ENCODE measurements at regions of chr10 and their contacts with region 1.

Region 1: DNA sequence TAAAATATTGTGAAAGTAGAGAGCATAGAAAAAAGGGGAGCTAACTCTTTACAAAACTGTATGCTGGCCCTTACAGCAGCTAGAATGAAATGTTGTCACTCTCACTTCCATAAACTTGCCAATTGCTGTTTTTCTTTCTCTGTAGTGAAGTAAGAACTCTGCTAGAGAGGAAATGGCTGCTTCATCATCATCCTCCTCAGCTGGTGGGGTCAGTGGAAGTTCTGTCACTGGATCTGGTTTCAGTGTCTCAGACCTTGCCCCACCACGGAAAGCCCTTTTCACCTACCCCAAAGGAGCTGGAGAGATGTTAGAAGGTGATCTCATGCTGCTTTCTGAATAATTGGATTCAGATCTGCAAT is 7.6 kb upstream of the ASCC1 start:
- DNase-seq: no peak
- ATAC-seq: peak; percentile 41
- H3K4me3 Mint-ChIP-seq: peak overlapping the region; percentile 52
- H3K27ac Mint-ChIP-seq: peak overlapping the region; percentile 92
- H3K4me1 Mint-ChIP-seq: peaks cover 55% of the 10 kb centered on the region
- H3K27me3 Mint-ChIP-seq: no peaks in the 10 kb centered on the region

Region 2: DNA sequence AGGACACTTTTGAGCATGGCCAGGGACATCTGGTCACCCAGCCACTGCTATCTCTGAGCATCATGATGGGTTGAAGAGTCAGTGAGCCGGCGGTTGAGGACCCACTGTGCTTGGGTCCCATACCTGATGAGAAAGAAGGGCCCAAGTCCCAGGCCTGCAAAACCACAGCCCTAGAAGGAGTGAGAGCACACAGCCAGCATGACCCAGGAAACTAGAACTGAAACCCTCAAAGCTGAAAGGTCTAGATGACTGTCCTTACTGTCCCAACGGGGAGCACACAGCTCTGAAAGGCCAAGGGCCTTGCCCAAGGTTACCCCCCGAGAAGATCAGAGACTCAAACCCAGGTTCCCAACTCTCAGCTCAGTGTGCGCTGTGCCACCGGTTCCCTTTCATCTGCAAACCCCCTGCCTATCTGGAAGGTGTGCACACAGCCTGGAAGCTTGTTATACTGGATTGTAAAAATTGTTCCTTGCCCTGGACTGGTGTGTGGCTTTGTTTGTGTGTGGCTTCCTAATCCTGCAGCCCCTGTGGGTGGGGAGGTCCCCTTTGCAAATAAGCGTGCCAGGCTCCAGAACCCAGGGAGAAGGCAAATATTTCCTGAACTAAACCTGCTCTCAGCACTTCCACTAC is 350.0 kb before region 1 on chr10:
- CTCF ChIA-PET with region 1: no interaction called
- POLR2A ChIA-PET with region 1: no interaction called
- intact Hi-C with region 1: no loop called
- DNase-seq: no peak
- ATAC-seq: no peak
- H3K4me3 Mint-ChIP-seq: no peak overlapping the region
- H3K27ac Mint-ChIP-seq: no peak overlapping the region
- H3K4me1 Mint-ChIP-seq: peaks cover 16% of the 10 kb centered on the region
- H3K27me3 Mint-ChIP-seq: no peaks in the 10 kb centered on the region

Region 3: DNA sequence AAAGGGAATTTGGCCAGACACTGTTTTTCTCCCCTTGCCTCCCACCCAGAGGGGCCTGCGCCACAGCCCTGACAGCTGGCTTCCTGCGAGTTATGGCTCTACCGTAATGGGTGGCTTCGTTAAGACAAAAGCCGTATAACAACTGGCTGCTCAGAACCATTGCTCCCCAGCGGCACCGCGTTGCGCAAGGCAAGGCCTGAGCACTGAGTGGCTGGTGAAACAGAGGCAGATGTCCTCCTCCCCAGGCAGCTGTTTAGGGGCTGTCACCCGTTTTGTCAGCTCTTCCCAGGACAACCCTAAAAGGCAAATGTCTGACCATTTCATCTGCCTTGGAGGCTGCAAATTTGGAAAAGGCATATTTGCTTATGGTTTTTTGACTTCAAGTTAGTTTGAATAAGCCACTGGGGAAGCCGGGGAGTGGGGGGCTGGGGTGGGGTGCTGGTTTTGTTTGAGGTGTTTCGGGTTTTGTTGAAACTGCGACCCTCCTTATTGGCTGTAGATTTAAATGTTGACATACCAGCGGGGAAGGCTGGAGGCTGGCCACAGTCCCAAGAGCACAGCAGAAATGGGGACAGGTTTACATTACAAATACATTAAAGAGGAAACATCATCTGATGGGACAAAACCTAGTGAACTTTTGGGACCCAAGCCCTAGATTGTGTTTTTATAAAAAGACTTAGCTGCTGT is 134.7 kb before region 1 on chr10:
- CTCF ChIA-PET with region 1: interaction called, 4 read pairs
- POLR2A ChIA-PET with region 1: interaction called, 3 read pairs
- intact Hi-C with region 1: loop called (anchors 2 to 5 kb)
- DNase-seq: peak; percentile 79
- ATAC-seq: peak; percentile 50
- H3K4me3 Mint-ChIP-seq: peak overlapping the region; percentile 98
- H3K27ac Mint-ChIP-seq: peak overlapping the region; percentile 100
- H3K4me1 Mint-ChIP-seq: peaks cover 57% of the 10 kb centered on the region
- H3K27me3 Mint-ChIP-seq: no peaks in the 10 kb centered on the region

Region 4: GRCh38 chr10:72133517-72133916 is 90.2 kb before region 1 on chr10:
- CTCF ChIA-PET with region 1: interaction called, 3 read pairs
- POLR2A ChIA-PET with region 1: no interaction called
- intact Hi-C with region 1: loop called (anchors 5 to 10 kb)
- DNase-seq: no peak
- ATAC-seq: no peak
- H3K4me3 Mint-ChIP-seq: no peak overlapping the region
- H3K27ac Mint-ChIP-seq: peak overlapping the region; percentile 1
- H3K4me1 Mint-ChIP-seq: peaks cover 33% of the 10 kb centered on the region
- H3K27me3 Mint-ChIP-seq: no peaks in the 10 kb centered on the region